Breast epithelium (tissue), 4 donors: ENCODE measurements at regions of chr12 and their contacts with region 1.

Region 1: DNA sequence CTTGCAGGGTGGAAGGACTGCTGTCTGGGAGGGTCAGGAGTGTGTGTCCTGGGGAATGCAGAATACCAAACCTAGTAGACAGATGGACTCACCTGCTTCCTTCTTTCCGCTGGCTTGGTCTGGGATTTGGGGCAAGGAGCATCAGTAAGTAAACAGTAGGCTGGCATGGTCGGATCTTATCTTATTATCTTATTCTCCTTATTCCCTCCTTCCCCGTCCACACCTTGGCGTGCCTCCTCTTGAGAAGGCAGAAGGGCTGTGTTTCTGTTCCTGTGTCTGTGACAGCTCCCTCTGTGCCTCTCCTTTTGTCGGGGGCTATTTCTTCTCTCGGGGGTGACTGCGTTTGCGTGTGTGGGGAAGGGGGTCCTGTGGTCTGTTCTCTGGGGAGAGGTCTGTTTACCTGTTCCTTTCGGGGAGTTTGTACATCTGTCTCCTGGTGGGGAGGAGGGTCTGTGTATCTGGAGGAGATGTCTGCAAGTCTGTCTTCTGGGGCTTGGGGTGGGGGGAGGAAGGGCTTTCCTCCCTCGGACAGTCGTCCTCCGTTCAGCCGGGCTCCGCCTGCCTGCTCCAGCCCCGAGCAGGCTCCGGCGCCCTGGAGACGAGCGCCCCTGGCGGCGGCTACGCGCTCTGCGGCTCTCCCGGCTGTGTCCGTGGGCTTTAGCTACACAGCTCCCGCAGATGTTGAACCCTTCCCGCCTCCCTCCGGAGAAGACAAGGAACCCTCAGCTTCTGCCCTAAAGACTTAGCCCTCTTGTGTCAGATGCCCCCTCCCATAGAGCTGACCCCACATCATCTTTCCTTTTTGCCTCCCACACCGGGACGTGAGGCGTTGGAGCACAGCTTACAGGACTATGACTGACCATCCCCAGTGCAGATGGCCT is 4.3 kb downstream of the KRT86 start:
- DNase-seq: peak; percentile 80 to 85
- H3K4me3 ChIP-seq: peak overlapping the region in 2 of 3 donors; percentile 37 to 59
- H3K27ac ChIP-seq: peak overlapping the region; percentile 96
- H3K4me1 ChIP-seq: peaks cover 12 to 14% of the 10 kb centered on the region in 2 donors
- H3K27me3 ChIP-seq: no peaks in the 10 kb centered on the region
- CTCF ChIP-seq: peak; percentile 64 to 99 (median 97)
- POLR2A ChIP-seq: no peak

Region 2: DNA sequence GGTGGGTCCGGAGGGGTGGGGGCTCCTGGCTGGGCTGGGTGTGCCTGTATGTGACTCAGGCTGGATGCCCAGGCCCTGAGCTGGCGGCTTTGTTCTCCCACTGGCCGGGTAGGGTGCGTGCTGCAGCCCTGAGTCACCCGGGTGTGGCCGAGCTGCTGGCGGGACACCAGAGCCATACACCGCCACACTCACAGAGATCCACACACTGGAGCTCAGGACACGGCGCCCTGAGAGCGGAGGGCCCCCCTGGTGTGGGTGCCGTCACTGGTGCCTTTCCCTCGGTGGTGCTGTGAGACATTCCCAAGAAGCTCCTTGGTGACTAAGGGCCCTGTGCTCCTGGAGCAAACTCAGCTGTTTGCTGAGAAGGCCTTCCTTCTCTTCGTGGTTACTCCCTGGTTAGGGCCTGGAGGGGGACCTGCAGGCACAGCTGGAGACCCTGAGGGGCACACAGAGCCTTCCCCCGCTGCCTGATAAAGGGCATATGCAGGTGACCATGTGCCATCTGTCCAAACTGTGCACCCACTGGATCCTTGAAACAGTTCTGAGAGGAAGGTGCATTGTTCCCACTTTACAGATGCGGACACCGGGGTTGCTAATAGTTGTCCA is 131.3 kb before region 1 on chr12:
- intact Hi-C with region 1: loop called (anchors 1 kb)
- DNase-seq: peak; percentile 98
- H3K4me3 ChIP-seq: no peak overlapping the region
- H3K27ac ChIP-seq: peak overlapping the region; percentile 100
- H3K4me1 ChIP-seq: peaks cover 15 to 67% of the 10 kb centered on the region in 2 donors
- H3K27me3 ChIP-seq: no peaks in the 10 kb centered on the region
- CTCF ChIP-seq: peak in 1 of 3 donors; percentile 5
- POLR2A ChIP-seq: peak; percentile 58

Region 3: GRCh38 chr12:52156736-52157565 is 121.8 kb before region 1 on chr12:
- intact Hi-C with region 1: loop called (anchors 1 kb)
- DNase-seq: peak; percentile 88 to 92
- H3K4me3 ChIP-seq: no peak overlapping the region
- H3K27ac ChIP-seq: peak overlapping the region; percentile 88 to 100
- H3K4me1 ChIP-seq: peaks cover under 1% of the 10 kb centered on the region in 2 donors
- H3K27me3 ChIP-seq: no peaks in the 10 kb centered on the region
- CTCF ChIP-seq: peak; percentile 90 to 99 (median 96)
- POLR2A ChIP-seq: no peak

Region 4: GRCh38 chr12:52235822-52236692 is 42.7 kb before region 1 on chr12:
- intact Hi-C with region 1: loop called (anchors 1 kb)
- DNase-seq: peak; percentile 69 to 85
- H3K4me3 ChIP-seq: peak overlapping the region in 2 of 3 donors; percentile 71 to 78
- H3K27ac ChIP-seq: peak overlapping the region; percentile 98
- H3K4me1 ChIP-seq: peaks cover 9% of the 10 kb centered on the region in 2 donors
- H3K27me3 ChIP-seq: peaks cover 0 to 5% of the 10 kb centered on the region in 2 donors
- CTCF ChIP-seq: peak in 1 of 3 donors; percentile 8
- POLR2A ChIP-seq: no peak

Region 5: DNA sequence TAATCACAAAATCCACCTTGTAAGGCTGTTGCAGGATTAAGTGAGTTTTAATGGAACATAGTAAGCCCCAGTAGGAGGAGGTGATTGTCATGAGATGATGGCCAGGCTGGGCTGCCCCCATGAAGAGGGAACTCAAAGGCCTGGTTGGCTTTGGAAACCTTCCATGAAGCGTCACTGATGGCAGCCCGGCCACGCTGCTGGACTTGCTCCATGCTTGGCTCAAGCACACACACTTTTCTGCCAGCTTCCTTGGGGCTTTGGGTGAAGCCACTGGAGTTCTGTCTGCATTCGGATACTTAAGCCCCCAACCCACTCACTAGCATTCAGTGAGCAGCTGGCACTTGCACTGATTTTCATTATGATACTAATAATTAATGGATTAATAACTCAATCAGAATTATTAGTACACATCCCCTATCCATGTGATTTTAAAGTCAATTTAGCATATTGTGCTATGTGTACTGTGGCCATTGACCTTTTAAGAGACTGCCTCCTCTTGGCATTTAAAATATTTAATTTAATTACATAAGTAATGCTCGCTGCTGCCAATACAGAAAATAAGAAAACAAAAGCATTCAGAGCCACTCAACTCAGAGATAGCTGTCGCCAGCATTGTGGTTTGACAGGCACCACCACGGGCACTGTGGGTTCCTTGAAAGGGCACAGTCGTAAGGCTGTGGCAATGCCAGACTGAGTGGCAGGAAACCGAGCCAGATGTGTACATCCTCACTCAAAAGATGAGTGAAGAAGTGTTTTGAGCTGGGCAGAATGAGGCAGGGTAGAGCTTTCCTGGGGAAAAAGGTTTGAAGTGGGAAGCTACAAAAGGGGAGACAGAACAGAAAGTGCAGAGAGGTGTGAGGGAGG is 72.6 kb after region 1 on chr12:
- intact Hi-C with region 1: no loop called
- DNase-seq: peak; percentile 64 to 82
- H3K4me3 ChIP-seq: no peak overlapping the region
- H3K27ac ChIP-seq: peak overlapping the region; percentile 49 to 75
- H3K4me1 ChIP-seq: no peaks in the 10 kb centered on the region
- H3K27me3 ChIP-seq: no peaks in the 10 kb centered on the region
- CTCF ChIP-seq: no peak
- POLR2A ChIP-seq: no peak

Region 6: DNA sequence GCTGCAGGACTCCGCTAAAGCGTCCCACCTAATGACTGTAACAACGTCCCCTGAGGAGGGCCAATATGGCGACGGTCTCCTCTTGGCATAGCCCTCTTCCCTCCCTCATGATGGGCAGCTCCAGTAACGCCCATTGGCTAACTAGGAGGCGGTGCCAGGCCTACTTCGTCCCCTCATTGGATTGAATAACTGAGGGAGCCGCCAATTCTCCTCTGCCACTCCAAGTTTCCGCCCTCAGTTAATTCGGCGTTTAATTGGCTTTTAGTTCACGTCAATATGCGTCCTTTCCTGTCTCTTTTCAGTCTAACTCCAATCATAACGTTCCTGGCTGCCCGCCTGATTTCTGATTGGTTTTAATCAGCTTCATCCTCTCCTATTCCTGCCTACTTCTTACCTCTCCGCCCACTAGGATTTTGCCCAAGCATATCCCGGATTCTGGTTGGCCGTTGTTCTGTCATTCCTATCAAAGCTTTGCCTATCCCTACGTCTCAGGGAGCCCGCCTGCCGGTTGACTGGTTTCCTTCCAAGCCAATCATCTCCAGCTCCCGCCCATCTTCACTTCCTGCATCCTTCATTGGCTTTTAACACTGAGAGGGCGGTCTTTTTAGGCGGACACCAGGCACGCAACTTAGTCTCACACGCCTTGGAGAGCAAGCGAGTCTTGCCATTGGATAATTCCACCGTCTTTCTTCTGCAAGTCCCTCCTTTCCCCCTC is 1100.8 kb after region 1 on chr12:
- intact Hi-C with region 1: loop called (anchors 10 kb)
- DNase-seq: peak; percentile 99 to 100
- H3K4me3 ChIP-seq: peak overlapping the region; percentile 57 to 75 (median 72)
- H3K27ac ChIP-seq: peak overlapping the region; percentile 99
- H3K4me1 ChIP-seq: peaks cover 15 to 32% of the 10 kb centered on the region in 2 donors
- H3K27me3 ChIP-seq: no peaks in the 10 kb centered on the region
- CTCF ChIP-seq: no peak
- POLR2A ChIP-seq: peak; percentile 89